ENCODE measurements at regions of chr12 and their contacts with region 1.

Region 1: DNA sequence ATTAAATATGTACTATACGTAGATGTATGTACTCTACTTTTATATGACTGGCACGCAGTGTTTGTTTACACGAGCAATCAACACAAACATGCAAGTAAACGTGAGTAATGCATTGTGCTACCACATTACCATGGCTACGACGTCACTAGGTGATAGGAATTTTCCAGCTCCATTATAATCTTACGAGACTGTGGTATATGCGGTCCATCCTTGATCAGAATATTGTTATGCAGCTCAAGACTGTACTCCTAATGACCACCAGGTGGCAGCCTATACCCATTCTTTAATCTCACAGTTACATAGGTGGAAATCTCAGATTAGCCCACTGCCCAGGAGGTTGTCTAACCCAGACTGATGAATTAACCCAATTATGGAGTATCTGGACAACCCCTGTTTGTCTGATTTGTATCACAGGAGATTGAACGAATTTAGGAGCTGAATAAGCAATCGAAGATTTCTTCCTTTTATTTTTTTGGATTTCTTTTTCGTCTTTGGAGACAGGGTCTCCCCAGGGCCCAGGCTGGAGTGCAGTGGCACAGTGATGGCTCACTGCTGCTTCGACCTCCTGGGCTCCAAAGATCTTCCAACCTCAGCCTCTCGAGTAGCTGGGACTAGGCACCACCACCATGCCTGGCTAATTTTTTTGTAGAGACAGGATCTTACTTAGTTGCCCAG is 8.7 kb upstream of the TESPA1 start:
- DNase-seq: peak in 1 of 2 donors; percentile 51
- H3K4me3 ChIP-seq: no peak overlapping the region
- H3K27ac ChIP-seq: no peak overlapping the region
- H3K4me1 ChIP-seq: no peaks in the 10 kb centered on the region
- H3K27me3 ChIP-seq: peaks cover 0 to 4% of the 10 kb centered on the region in 2 donors
- CTCF ChIP-seq: peak; percentile 85 to 91

Region 2: DNA sequence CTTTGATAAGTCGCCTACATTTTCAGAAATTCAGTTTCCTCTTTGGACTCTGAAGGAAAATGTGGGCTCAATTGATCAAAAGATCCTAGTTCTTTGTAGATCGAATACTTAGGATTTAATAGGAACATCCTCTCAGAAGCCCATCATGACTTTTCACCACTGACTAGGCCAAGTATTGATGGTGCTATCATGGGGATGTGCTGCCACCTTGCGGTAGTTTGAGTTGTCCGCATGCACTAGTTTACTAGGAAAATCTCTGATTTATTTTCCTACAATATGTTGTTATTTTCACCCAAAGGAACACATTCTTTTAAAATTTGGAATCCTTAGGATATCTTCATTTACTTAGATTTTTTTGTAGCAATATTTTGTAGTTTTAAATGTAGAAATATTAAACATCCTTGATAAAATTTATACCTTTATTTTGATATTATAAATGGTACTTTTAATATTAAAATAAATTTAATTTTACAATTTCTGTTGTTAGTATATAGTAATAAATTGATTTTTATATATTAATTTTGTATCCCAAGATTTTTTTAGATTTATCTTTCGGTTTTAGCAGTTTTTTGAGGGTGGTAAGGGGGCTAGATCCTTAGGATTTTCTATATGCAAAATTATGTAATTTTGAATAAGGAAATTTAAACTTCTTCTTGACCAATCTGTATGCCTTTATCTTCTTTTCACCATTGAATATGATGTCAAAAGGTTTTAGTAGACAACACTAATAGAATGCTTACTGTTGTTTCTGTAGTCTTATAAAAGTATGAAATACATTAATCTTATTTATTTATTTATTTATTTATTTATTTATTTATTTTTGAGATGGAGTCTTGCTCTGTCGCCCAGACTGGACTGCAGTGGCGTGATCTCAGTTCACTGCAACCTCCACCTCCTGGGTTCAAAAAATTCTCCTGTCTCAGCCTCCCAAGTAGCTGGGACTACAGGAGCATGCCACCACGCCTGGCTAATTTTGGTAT is 80.0 kb after region 1 on chr12:
- intact Hi-C with region 1: loop called (anchors 10 kb)
- DNase-seq: peak; percentile 61 to 70
- H3K4me3 ChIP-seq: no peak overlapping the region
- H3K27ac ChIP-seq: no peak overlapping the region
- H3K4me1 ChIP-seq: no peaks in the 10 kb centered on the region
- H3K27me3 ChIP-seq: peaks cover 0 to under 1% of the 10 kb centered on the region in 2 donors
- CTCF ChIP-seq: peak; percentile 58 to 71

Region 3: GRCh38 chr12:55196188-55196587 is 202.9 kb after region 1 on chr12:
- intact Hi-C with region 1: no loop called
- DNase-seq: no peak
- H3K4me3 ChIP-seq: no peak overlapping the region
- H3K27ac ChIP-seq: no peak overlapping the region
- H3K4me1 ChIP-seq: no peaks in the 10 kb centered on the region
- H3K27me3 ChIP-seq: no peaks in the 10 kb centered on the region
- CTCF ChIP-seq: no peak